A549 (cell line): ENCODE measurements at regions of chr3 and their contacts with region 1.

Region 1: DNA sequence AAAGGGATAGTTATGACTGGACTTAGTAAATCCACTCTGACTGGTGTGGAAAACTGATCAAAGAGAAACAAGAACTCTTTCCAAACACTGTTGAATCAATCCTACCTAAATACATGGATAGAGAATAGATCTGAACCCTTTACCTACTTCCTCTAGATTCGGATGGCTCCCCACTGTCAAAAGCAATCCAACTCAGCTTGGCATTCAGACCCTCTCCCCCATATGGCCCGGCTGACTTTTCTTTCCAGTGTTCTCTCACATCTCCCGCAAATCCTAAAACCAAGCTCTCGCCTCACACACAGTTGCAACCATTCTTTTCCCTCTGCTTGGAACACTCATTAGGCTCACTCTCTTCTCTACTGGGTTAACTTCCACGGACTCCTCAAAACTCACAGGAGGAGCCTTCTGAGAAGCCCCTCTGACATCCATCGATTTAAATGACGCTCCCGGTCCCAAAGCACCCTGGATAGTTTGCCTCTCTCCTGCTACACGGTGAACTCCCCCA is 639 bp downstream of the SPICE1 start:
- DNase-seq: no peak
- ATAC-seq: no peak; a peak in 3 of 6 replicates
- H3K4me3 ChIP-seq: peak overlapping the region; percentile 81
- H3K27ac ChIP-seq: peak overlapping the region; percentile 89 to 97
- H3K4me1 ChIP-seq: peaks cover 12% of the 10 kb centered on the region; the same call in 2 of the 3 replicates
- CTCF ChIP-seq: no peak
- EP300 ChIP-seq: no peak
- POLR2A ChIP-seq: no peak
- RAD21 ChIP-seq: no peak

Region 2: DNA sequence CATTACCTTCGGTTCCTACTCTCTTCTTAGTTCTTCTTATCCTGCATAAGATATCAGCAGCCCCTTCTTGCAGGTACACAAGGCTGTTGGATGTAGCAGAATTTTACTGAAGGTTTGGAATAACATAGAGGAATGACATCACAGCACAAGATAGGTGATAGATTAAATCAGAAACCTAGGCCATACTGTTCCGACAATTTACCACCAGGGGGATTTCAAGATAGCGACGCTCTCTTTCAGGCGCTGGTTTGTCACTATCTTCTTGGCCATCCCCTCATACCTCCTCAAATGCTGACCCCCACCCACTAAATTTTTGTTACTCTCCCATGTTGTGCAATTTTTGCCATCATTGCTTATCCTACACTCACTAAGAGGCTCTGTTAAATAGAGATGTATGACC is 21.6 kb after region 1 on chr3:
- CTCF ChIA-PET with region 1: interaction called, 8 read pairs
- POLR2A ChIA-PET with region 1: interaction called, 33 read pairs
- DNase-seq: peak in 1 of 2 experiments; percentile 41
- ATAC-seq: peak; percentile 57 to 66
- H3K4me3 ChIP-seq: no peak overlapping the region
- H3K27ac ChIP-seq: peak overlapping the region; percentile 71 to 75
- H3K4me1 ChIP-seq: peaks cover 29% of the 10 kb centered on the region
- CTCF ChIP-seq: 0 out of 3 replicates have a peak, but pooled peaks have one; percentile 13
- EP300 ChIP-seq: no peak
- POLR2A ChIP-seq: no peak
- RAD21 ChIP-seq: no peak

Region 3: DNA sequence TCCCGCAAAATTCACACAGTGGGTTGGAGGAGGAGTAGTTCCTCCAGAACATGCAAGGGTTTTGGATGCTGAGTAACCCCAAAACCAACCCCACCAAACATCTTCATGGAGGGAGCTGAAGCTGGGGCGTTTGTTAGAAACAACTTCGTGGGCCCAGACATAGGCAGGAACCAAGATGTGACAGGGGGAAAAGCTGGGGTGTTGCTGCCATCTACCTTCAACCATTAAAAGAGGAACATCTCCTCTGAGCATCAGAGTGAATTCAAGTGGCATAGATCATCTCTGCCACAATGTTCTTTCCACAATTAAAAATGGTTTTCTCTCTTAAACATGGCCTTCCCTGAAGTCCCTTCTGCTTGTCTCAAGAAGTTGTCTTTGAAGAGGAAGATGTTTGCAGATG is 38.5 kb after region 1 on chr3:
- CTCF ChIA-PET with region 1: interaction called, 14 read pairs
- POLR2A ChIA-PET with region 1: interaction called, 16 read pairs
- DNase-seq: no peak
- ATAC-seq: peak; percentile 45 to 55; a peak in 3 of 6 replicates
- H3K4me3 ChIP-seq: no peak overlapping the region
- H3K27ac ChIP-seq: no peak overlapping the region
- H3K4me1 ChIP-seq: peaks cover 16% of the 10 kb centered on the region
- CTCF ChIP-seq: peak; percentile 25; the same call in 2 of the 3 replicates
- EP300 ChIP-seq: no peak
- POLR2A ChIP-seq: no peak
- RAD21 ChIP-seq: peak; percentile 46 to 50; a peak in 3 of 5 replicates

Region 4: GRCh38 chr3:113575206-113575605 is 60.9 kb after region 1 on chr3:
- CTCF ChIA-PET with region 1: interaction called, 44 read pairs
- POLR2A ChIA-PET with region 1: interaction called, 8 read pairs
- DNase-seq: peak in 1 of 2 experiments; percentile 59
- ATAC-seq: peak in 1 of 2 experiments; percentile 51; a peak in 3 of 6 replicates
- H3K4me3 ChIP-seq: no peak overlapping the region
- H3K27ac ChIP-seq: peak overlapping the region in 1 of 2 experiments; percentile 44; a peak in 1 of 6 replicates
- H3K4me1 ChIP-seq: peaks cover 25% of the 10 kb centered on the region
- CTCF ChIP-seq: no peak
- EP300 ChIP-seq: no peak
- POLR2A ChIP-seq: no peak
- RAD21 ChIP-seq: no peak

Region 5: DNA sequence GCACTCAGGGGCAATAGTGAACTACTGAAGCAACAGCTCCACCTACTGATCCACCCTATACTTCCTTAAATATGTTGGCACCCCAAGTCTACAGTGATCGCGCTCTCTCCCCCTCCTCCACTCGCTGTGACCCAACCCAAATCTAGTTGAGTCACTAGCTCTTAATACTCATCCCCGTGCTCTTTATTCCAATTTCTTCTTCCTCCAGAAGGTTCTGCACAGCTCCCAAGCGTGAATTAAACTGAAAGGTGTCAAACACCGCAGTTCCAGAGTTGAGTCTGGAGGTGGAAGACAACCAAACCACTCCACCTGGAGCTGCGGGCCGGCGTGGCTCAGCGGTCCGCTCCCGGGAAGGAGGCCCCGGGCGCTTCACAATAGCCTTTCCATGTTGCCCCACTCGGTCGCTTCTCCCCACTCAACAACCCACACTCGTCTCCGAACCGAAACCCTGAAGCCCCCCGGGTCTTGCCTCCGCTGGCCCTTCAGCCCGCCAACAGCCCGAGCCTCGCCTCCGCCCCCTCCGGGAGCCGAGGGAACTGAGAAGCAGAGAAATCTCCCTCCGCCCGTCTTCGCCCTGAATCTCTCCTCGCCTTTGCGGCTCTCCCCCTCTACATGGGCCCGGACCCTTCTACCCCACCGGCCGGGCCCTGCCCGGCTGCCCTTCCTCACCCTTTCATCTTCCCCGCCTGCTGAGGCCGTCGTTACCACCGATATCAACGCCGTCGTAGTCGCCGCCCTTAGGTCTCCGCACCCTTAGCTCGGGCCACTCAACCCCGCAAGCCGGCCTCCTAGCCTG is 231.2 kb after region 1 on chr3:
- CTCF ChIA-PET with region 1: interaction called, 6 read pairs
- POLR2A ChIA-PET with region 1: interaction called, 23 read pairs
- DNase-seq: peak; percentile 88 to 95
- ATAC-seq: peak; percentile 80 to 88
- H3K4me3 ChIP-seq: peak overlapping the region; percentile 70
- H3K27ac ChIP-seq: peak overlapping the region; percentile 96 to 99
- H3K4me1 ChIP-seq: peaks cover 40% of the 10 kb centered on the region
- CTCF ChIP-seq: peak; percentile 70
- EP300 ChIP-seq: no peak
- POLR2A ChIP-seq: no peak
- RAD21 ChIP-seq: peak; percentile 61 to 70